Cardiac septum (tissue), 1 donor: ENCODE measurements at regions of chr5 and their contacts with region 1.

Region 1: DNA sequence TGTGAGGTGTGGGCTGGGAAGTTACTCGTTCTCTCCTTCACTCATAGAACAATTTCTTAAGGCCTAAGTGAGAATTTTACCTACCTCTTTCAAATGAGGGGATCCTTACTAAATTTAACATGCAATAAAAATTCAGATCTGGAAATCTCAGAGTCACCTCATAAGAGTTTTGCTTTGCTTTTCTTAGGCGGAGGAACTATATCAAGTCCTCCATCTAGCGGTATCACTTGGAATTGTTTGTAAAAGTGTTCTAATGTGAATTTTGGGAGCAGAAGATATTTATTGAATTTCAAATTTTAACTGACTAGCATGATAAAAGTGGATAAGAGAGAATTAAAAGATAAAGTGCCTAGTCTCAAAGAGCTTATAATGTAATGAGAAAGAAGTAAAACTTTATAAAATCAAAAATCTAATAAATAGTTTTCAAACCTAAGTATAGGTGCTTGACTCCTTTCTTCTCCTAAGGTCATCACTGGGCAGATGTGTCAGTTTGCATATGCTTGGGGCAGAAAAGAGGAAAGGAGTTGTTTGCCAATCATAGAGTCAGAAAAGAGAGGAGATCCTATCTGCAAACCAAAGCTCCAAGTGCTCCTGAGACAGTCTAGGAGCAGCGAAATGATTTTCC is 145.7 kb upstream of the DAB2 start:
- DNase-seq: no peak

Region 2: DNA sequence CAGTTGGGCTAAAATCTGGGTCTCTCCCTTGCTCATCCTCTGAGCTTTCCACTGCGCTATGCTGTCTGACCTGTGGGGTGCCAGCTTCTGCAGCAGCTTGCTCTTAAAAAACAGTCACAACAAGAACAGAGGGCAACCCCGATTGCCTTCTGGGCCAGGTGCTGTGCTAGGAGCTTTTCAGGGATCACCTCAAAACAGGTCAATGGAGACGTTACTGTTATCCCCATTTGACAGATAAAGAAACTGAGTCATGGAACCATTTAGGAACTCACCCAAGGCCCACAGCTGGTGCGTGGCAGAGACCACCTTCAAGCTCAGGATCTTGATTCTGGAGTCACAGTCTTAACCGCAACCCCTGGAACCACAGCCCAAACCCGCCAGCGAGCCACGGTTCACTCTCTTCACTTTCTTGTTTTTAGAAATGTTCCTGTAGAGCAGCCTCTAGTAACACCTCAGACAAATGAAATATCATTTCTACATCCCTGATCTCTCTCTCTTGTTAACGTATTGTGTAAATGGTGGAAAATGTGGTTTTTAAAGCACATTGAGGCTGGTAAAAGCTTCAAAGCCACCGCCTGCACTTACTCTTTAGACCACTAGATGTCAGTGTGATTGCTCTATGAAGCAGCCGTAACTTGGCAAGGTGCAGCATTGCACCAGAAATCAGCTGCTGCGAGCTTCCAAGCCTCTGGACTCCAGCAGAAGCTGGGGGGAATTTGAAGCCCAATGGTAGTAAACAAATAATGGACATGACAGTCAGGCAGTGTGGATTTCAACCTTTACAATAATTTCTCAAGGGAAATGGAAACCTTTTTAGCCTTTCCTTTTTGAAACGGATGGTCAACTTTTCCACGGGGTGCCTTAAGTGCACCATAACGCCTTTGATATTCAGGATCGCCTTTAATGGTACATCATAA is 352.9 kb before region 1 on chr5:
- intact Hi-C with region 1: loop called (anchors 2 kb)
- DNase-seq: no peak